Activated T-helper 1 cell treated with anti-CD3 and anti-CD28 coated beads, Interleukin-12 subunit alpha, Interleukin-12 subunit beta, Interleukin-2, Interleukin-4 antibody, amounts not matched to agents 30 ng/mL and 10 ng/mL and 1 ng/mL, durations not matched to agents 14 hours and 24 hours and 36 hours (primary cell): ENCODE measurements at regions of chr9 and their contacts with region 1.

Region 1: DNA sequence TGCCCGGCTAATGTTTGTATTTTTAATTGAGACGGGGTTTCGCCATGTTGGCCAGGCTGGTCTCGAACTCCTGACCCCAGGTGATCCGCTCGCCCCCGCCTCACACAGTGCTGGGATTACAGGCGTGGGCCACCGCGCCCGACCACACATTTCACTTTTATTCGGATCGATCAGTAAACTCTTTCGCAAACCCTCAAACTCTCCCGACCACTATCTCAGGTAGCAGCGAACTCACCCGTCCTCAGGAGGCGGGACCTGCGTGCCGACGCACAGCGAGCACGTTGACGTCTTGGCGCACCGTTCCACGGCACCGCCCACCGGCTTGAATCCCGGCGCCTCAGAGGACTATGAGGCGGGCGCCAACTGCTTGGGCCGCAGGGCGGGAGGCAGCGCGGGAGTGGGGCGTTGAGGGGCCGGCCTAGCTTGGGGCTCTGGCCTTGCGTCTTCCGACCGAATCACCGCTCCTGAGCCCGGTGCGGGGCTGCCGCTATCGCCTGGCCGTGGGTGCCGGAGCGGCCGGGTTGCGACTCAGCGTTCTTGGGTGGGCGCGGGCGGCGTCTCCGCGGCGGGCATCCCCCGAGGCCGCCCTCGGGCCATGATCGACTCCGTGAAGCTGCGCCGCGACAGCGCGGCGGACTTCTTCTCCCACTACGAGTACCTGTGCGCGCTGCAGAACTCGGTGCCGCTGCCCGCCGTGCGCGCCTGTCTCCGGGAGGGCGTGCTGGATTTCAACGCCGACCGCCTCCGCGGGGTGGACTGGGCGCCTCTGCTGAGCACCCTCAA is at the start of gene CEP78:
- DNase-seq: peak; percentile 85
- H3K4me3 Mint-ChIP-seq: no peak within 1 kb of the TSS
- H3K27ac Mint-ChIP-seq: peak within 1 kb of the TSS; percentile 92
- H3K4me1 Mint-ChIP-seq: peaks cover 31% of the 10 kb centered on the region
- H3K27me3 Mint-ChIP-seq: no peaks in the 10 kb centered on the region
- total RNA-seq, gene CEP78: 35.2 and 41.1 TPM in 2 replicates

Region 2: DNA sequence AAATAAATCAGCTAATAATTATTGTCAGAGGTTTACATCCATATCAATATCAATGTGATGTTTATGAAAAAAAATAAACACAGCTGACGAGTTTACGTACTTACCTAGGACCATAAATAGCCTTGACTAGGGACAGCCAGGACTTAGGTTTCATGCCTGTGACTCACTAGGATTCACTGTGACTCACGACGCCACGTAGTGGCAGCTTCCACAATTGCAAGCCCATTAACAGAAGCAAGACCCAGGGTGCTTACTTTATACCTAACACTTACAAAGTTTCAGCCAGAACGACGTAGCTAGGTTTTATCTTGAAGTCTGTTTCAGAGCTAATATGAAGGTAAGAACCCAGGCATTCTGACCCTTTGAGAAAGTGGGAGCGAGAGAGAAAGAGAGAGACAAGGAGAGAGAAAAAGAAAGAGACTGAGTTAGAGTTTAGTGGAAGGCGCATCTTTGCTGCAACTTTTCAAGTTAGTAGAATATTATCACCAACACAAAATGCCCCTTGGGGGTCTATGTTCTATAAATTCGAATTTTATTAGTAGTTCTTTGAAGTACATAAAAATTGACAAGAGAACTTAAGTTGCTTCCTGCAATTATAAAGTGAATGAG is 779.0 kb before region 1 on chr9:
- intact Hi-C with region 1: loop called (anchors 10 kb)
- DNase-seq: peak; percentile 71
- H3K4me3 Mint-ChIP-seq: no peak overlapping the region
- H3K27ac Mint-ChIP-seq: no peak overlapping the region
- H3K4me1 Mint-ChIP-seq: peaks cover 25% of the 10 kb centered on the region
- H3K27me3 Mint-ChIP-seq: peaks cover 4% of the 10 kb centered on the region

Region 3: DNA sequence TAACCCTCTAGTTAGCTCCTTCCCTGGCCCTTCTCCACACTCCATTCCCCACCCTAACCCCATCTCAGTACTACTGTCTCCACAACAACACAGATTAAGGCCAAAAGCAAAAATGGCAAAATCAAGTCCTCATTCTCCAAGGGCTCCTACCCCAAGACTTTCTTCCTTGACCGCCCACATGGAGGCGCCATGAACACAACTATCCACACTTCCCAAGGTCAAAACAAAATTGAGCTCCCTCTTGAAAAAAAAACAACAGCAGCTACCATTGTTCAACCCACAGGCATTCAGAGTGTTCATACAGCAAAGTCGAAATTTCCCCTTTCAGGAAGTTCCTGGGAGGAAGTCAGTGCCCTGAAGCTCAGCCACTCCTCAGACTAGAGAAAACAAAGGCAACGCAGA is 258.7 kb before region 1 on chr9:
- intact Hi-C with region 1: loop called (anchors 1 kb)
- DNase-seq: peak; percentile 34
- H3K4me3 Mint-ChIP-seq: peak overlapping the region; percentile 40
- H3K27ac Mint-ChIP-seq: peak overlapping the region; percentile 81
- H3K4me1 Mint-ChIP-seq: peaks cover 51% of the 10 kb centered on the region
- H3K27me3 Mint-ChIP-seq: no peaks in the 10 kb centered on the region

Region 4: DNA sequence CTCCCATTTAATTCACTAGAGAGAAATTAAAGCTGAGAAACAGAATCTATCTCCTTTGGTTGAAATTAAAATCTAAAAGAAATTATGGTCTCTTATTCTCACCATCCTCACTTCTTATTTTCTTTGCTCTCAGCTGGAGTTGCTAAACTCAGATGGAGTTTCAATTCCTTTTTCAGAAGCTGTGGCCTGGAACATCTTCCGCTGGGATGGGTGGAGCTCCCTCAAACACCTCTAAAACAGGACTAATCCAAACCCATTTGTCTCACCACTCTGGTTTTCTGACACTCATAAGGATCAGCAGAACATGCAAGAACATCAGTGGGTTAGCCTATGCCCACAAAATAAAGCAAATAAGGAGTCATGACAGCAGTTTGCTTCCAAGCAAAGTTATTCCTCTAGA is 39.7 kb before region 1 on chr9:
- intact Hi-C with region 1: loop called (anchors 2 kb)
- DNase-seq: no peak
- H3K4me3 Mint-ChIP-seq: no peak overlapping the region
- H3K27ac Mint-ChIP-seq: no peak overlapping the region
- H3K4me1 Mint-ChIP-seq: peaks cover 18% of the 10 kb centered on the region
- H3K27me3 Mint-ChIP-seq: peaks cover 6% of the 10 kb centered on the region

Region 5: GRCh38 chr9:78213712-78214111 is 22.2 kb before region 1 on chr9:
- intact Hi-C with region 1: loop called (anchors 2 kb)
- DNase-seq: no peak
- H3K4me3 Mint-ChIP-seq: no peak overlapping the region
- H3K27ac Mint-ChIP-seq: no peak overlapping the region
- H3K4me1 Mint-ChIP-seq: peaks cover 39% of the 10 kb centered on the region
- H3K27me3 Mint-ChIP-seq: peaks cover 2% of the 10 kb centered on the region

Region 6: DNA sequence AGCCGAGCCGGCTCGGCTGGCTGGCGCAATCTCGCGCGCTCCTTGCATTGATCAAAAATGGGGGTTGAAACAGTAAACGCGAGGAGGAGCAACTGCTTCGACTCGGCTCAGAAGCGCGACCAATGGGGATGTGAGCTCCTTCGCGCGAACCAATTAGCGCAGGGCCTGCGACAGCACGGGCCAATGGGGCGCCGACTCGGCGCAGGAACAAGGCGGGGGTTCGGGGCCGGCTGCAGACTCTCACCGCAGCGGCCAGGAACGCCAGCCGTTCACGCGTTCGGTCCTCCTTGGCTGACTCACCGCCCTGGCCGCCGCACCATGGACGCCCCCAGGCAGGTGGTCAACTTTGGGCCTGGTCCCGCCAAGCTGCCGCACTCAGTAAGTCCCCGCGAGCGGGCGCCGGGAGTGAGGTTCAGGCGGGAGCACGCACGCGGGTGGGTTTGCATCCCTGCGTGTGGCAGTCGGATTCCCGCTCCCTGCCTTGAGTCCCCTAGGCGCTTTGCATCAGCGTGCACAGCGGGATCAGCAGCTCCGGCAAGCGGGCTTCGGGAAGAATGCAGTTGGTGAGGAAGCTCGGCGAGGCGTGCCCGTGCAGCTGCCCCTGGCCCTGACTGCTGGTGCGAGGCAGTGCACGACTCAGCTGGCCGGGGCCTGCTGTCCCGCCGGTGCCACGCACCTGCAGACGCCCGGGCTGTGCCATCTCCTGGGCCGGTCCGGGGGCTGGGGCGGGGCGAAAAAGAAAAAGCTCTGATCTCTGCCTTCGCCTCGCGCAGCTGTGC is 61.1 kb after region 1 on chr9 and contains the start of gene PSAT1:
- intact Hi-C with region 1: loop called (anchors 1 kb)
- DNase-seq: peak; percentile 92
- H3K4me3 Mint-ChIP-seq: peak within 1 kb of the TSS; percentile 91
- H3K27ac Mint-ChIP-seq: peak within 1 kb of the TSS; percentile 91
- H3K4me1 Mint-ChIP-seq: peaks cover 61% of the 10 kb centered on the region
- H3K27me3 Mint-ChIP-seq: no peaks in the 10 kb centered on the region
- total RNA-seq, gene PSAT1: 85.7 and 91.8 TPM in 2 replicates

Region 7: DNA sequence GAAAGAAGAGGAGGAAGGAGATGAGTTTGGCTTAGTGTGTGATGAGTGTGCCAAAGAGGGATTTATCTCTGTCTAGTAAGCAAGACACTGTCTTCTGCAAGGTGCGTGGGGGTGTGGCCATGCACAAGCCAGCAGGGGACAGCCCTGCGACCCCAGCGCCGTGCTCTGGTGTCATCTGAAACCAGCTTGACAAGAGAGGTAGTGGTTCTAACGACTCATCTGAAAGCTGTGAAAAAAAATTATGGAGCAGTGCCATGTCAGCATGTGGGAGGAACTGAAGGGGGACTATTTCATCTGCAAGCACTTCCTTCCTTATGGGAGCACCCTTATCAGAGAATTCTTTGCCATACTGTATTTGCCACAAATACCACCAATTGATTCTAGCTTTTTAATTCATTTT is 459.6 kb after region 1 on chr9:
- intact Hi-C with region 1: no loop called
- DNase-seq: no peak
- H3K4me3 Mint-ChIP-seq: no peak overlapping the region
- H3K27ac Mint-ChIP-seq: no peak overlapping the region
- H3K4me1 Mint-ChIP-seq: no peaks in the 10 kb centered on the region
- H3K27me3 Mint-ChIP-seq: no peaks in the 10 kb centered on the region